ENCODE measurements at regions of chr16 and their contacts with region 1.

Region 1: DNA sequence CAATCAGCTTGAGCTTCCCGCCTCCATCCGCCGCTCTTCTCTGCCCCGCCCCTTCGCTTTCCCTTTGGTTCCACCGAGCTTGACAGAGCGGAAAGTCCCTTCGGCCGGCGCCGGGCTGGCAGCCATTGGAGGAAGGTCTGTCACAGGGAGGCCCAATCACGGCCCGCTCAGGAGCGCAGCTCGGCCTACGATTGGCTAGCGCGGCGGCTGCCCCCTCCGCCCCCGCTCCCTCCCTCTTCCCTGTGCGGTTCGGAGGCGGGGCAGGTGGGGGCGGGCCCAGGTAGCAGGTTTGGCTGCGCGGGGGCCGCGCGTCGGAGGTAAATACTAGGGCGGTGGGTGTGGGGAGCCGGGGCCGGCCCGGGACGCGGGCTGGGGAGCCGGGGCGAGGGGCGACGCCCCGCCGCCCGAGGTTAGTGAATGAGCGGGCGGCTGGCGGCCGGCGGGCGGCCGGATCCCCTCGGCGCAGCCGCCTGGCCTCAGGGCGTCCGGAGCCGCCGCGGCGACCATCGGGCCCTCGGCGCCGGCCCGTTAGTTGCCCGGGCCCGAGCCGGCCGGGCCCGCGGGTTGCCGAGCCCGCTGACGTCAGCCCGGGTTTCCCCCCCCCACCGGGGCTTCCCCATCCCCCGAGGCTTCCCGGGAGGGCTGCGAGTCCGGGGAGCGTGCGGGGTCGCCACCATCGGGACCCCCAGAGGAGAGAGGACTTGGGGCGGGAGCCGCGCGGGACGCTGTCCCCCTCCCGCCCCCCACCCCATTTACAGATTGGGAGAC is at the start of gene CYLD:
- DNase-seq: peak; percentile 95 to 100 (median 100)
- ATAC-seq: peak; percentile 94
- H3K4me3 ChIP-seq: peak within 1 kb of the TSS; percentile 70
- H3K4me3 Mint-ChIP-seq: peak within 1 kb of the TSS; percentile 90 to 100 (median 96)
- H3K27ac ChIP-seq: peak within 1 kb of the TSS; percentile 100
- H3K27ac Mint-ChIP-seq: peak within 1 kb of the TSS; percentile 94 to 99 (median 98)
- H3K4me1 ChIP-seq: peaks cover 7 to 38% of the 10 kb centered on the region in 2 donors
- H3K4me1 Mint-ChIP-seq: peaks cover 28 to 52% (median 40%) of the 10 kb centered on the region in 7 donors
- H3K27me3 ChIP-seq: no peaks in the 10 kb centered on the region
- H3K27me3 Mint-ChIP-seq: no peaks in the 10 kb centered on the region
- total RNA-seq, gene CYLD: 259 to 393 (median 336) TPM

Region 2: GRCh38 chr16:50665128-50665878 is 76.7 kb before region 1 on chr16:
- CTCF ChIA-PET with region 1: interaction called, 225 read pairs
- POLR2A ChIA-PET with region 1: interaction called, 53 read pairs
- intact Hi-C with region 1: loop called (anchors 1 kb)
- DNase-seq: peak; percentile 71 to 90 (median 77)
- ATAC-seq: peak; percentile 80
- H3K4me3 ChIP-seq: peak overlapping the region; percentile 60
- H3K4me3 Mint-ChIP-seq: peak overlapping the region; percentile 73 to 87 (median 84)
- H3K27ac ChIP-seq: peak overlapping the region; percentile 62
- H3K27ac Mint-ChIP-seq: peak overlapping the region; percentile 82 to 97 (median 89)
- H3K4me1 ChIP-seq: peaks cover 17% of the 10 kb centered on the region in 2 donors
- H3K4me1 Mint-ChIP-seq: peaks cover 28 to 49% (median 44%) of the 10 kb centered on the region in 7 donors
- H3K27me3 ChIP-seq: no peaks in the 10 kb centered on the region
- H3K27me3 Mint-ChIP-seq: no peaks in the 10 kb centered on the region

Region 3: DNA sequence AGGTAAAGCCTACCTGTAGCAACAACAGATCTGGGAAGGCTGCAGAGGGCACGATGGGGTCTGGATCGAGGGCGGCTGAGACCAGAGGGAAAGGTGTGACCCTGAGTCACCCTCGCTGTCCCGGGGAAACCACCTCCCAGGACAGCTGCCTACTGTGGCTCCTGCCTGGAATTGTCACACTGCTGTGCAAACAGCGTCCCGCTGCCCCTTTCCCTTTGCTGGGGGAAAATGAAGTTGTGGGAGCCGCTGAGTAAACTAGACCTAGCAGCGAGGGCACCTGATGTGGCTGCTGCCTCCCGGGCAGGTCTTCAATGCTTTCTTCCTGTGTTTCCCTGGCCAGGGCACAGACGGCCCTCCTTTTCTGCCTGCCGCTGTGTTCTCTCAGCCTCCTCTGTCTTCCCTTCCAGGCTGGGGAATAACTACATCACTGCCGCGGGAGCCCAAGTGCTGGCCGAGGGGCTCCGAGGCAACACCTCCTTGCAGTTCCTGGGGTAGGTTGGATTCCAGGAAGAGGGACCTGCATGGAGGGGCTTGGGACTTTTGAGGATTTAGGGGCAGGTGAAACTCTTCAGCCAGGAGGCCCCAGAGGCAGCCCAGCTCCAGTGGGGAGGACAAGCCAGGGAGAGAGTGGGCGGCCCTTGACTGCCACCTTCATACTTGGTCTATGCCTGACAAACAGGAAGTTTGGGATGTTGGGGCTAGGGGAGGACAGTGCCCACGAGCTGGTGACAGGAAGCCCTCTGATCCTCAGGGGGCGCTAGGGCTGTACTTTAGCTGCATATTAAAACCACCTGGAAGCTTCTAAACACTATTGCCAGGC is 22.3 kb before region 1 on chr16:
- CTCF ChIA-PET with region 1: interaction called, 33 read pairs
- POLR2A ChIA-PET with region 1: interaction called, 20 read pairs
- intact Hi-C with region 1: loop called in 1 of 2 experiments (anchors 1 kb)
- DNase-seq: peak in 3 of 9 donors; percentile 31 to 40 (median 35)
- ATAC-seq: peak; percentile 38
- H3K4me3 ChIP-seq: no peak overlapping the region
- H3K4me3 Mint-ChIP-seq: peak overlapping the region in 4 of 10 donors; percentile 18 to 71 (median 41)
- H3K27ac ChIP-seq: no peak overlapping the region
- H3K27ac Mint-ChIP-seq: peak overlapping the region in 6 of 9 donors; percentile 41 to 71 (median 54)
- H3K4me1 ChIP-seq: peaks cover 16 to 22% of the 10 kb centered on the region in 2 donors
- H3K4me1 Mint-ChIP-seq: peaks cover 34 to 54% (median 42%) of the 10 kb centered on the region in 7 donors
- H3K27me3 ChIP-seq: no peaks in the 10 kb centered on the region
- H3K27me3 Mint-ChIP-seq: no peaks in the 10 kb centered on the region

Region 4: GRCh38 chr16:50731130-50731988 is 10.6 kb before region 1 on chr16:
- CTCF ChIA-PET with region 1: interaction called, 4 read pairs
- POLR2A ChIA-PET with region 1: interaction called, 32 read pairs
- intact Hi-C with region 1: loop called (anchors 1 kb)
- DNase-seq: peak in 8 of 9 donors; percentile 22 to 48 (median 39)
- ATAC-seq: peak; percentile 58
- H3K4me3 ChIP-seq: no peak overlapping the region
- H3K4me3 Mint-ChIP-seq: peak overlapping the region; percentile 10 to 73 (median 51)
- H3K27ac ChIP-seq: peak overlapping the region; percentile 27
- H3K27ac Mint-ChIP-seq: peak overlapping the region; percentile 61 to 92 (median 84)
- H3K4me1 ChIP-seq: peaks cover 0 to 4% of the 10 kb centered on the region in 2 donors
- H3K4me1 Mint-ChIP-seq: peaks cover 16 to 37% (median 23%) of the 10 kb centered on the region in 7 donors
- H3K27me3 ChIP-seq: no peaks in the 10 kb centered on the region
- H3K27me3 Mint-ChIP-seq: no peaks in the 10 kb centered on the region